ENCODE measurements at regions of chr15 and their contacts with region 1.

Region 1: DNA sequence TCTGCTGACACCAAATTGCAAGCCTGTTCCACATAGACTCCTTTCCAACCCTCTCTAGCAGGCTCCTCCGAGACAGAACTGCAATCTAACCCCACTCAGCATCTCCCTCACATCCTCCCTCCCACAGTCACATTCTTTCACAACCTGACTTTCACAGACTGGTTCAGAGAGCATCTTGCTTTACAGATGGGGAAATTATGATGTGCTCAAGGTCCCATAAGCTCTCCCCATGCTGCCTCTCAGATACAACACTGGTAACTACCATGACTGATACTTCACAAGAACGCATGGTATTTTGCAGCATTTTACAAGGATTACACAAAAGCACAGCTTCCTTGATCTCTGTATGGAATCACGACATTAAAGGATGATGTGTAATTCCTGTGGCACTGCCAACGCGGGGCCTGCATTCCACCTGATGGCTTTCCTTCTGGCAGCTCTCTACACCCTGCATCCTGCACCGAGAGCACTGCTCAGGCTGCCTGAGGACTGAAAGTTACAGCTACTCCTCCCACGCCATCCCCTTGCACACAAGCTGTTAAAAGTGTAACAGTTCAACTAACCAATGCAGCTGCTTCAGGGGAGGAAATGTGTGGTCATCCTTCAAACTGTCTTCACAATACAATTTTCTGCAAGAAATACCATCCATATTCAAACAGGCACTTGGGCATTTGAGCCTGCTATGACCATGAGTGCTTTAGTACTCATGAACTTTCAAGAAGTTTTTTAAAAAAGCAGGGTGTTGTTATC is 27.6 kb downstream of the TBC1D2B start:
- DNase-seq: peak; percentile 68
- ATAC-seq: peak; percentile 92
- H3K4me3 ChIP-seq: peak overlapping the region; percentile 45; the same call in 1 of the 2 replicates
- H3K27ac ChIP-seq: peak overlapping the region; percentile 53
- H3K4me1 ChIP-seq: peaks cover 71% of the 10 kb centered on the region
- H3K27me3 ChIP-seq: no peaks in the 10 kb centered on the region
- CTCF ChIP-seq: no peak
- EP300 ChIP-seq: peak; percentile 52 to 84
- POLR2A ChIP-seq: peak; percentile 63
- RAD21 ChIP-seq: no peak

Region 2: GRCh38 chr15:78000091-78000926 is 49.6 kb before region 1 on chr15:
- CTCF ChIA-PET with region 1: interaction called, 4 read pairs
- POLR2A ChIA-PET with region 1: no interaction called
- RAD21 ChIA-PET with region 1: interaction called, 7 read pairs
- SMC1A ChIA-PET with region 1: interaction called, 10 read pairs
- in situ Hi-C with region 1: no loop called
- intact Hi-C with region 1: no loop called
- DNase-seq: no peak
- ATAC-seq: peak; percentile 87
- H3K4me3 ChIP-seq: no peak overlapping the region
- H3K27ac ChIP-seq: no peak overlapping the region
- H3K4me1 ChIP-seq: peaks cover 16% of the 10 kb centered on the region
- H3K27me3 ChIP-seq: no peaks in the 10 kb centered on the region
- CTCF ChIP-seq: peak; percentile 62 to 82 (median 72)
- EP300 ChIP-seq: no peak
- POLR2A ChIP-seq: no peak
- RAD21 ChIP-seq: peak; percentile 82

Region 3: DNA sequence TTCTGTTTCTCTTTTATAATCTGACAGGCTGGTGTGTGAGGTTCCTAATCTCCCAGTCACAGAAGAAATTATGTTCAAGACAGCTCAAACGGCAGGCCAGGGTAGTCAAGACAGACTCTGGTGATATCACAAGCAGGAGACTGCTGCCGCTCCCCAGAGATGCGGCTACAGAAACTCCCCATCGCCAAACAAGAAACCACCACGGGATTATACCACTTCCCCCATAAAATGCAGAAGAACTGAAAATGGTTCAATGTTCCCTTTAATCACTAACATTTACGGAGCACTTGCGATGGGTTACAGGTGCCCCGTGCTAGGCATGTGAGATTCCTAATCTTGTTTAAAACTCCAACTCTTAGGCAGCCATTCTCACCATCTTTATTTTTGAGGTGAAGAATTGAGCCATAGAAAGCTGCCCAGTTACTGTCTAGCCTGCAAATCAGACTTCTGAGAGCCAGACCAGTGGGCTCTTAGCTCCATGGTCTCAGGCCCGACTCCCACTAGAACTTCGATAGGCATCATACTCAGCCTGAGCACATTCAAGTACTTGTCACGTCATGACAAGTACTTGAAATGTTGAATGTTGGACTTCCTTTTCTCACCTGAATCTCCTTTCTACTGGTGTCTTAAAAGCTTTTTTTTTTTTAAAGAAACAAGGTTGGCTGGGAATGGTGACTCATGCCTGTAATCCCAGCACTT is 30.8 kb before region 1 on chr15:
- CTCF ChIA-PET with region 1: interaction called, 8 read pairs
- POLR2A ChIA-PET with region 1: interaction called, 7 read pairs
- RAD21 ChIA-PET with region 1: interaction called, 18 read pairs
- SMC1A ChIA-PET with region 1: interaction called, 12 read pairs
- in situ Hi-C with region 1: no loop called
- intact Hi-C with region 1: no loop called
- DNase-seq: no peak
- ATAC-seq: peak; percentile 97
- H3K4me3 ChIP-seq: no peak overlapping the region
- H3K27ac ChIP-seq: peak overlapping the region; percentile 60
- H3K4me1 ChIP-seq: peaks cover 7% of the 10 kb centered on the region
- H3K27me3 ChIP-seq: no peaks in the 10 kb centered on the region
- CTCF ChIP-seq: no peak
- EP300 ChIP-seq: no peak
- POLR2A ChIP-seq: no peak
- RAD21 ChIP-seq: no peak

Region 4: GRCh38 chr15:78034495-78035191 is 15.2 kb before region 1 on chr15:
- CTCF ChIA-PET with region 1: interaction called, 19 read pairs
- POLR2A ChIA-PET with region 1: interaction called, 21 read pairs
- RAD21 ChIA-PET with region 1: interaction called, 22 read pairs
- SMC1A ChIA-PET with region 1: interaction called, 100 read pairs
- in situ Hi-C with region 1: no loop called
- intact Hi-C with region 1: no loop called
- DNase-seq: peak; percentile 66
- ATAC-seq: peak; percentile 92
- H3K4me3 ChIP-seq: no peak overlapping the region; the same call in 1 of the 2 replicates
- H3K27ac ChIP-seq: peak overlapping the region; percentile 4
- H3K4me1 ChIP-seq: peaks cover 40% of the 10 kb centered on the region
- H3K27me3 ChIP-seq: no peaks in the 10 kb centered on the region
- CTCF ChIP-seq: peak in 1 of 3 experiments; percentile 14; a peak in 1 of 6 replicates
- EP300 ChIP-seq: 0 out of 4 replicates have a peak, but pooled peaks of 1 of the 2 experiments have one; percentile 26
- POLR2A ChIP-seq: no peak
- RAD21 ChIP-seq: peak; percentile 24; the same call in 1 of the 2 replicates

Region 5: GRCh38 chr15:78077058-78077877 is 27.4 kb after region 1 on chr15 and contains the start of gene TBC1D2B:
- CTCF ChIA-PET with region 1: interaction called, 158 read pairs
- POLR2A ChIA-PET with region 1: interaction called, 6 read pairs
- RAD21 ChIA-PET with region 1: interaction called, 170 read pairs
- SMC1A ChIA-PET with region 1: interaction called, 305 read pairs
- in situ Hi-C with region 1: no loop called
- intact Hi-C with region 1: no loop called
- DNase-seq: no peak
- ATAC-seq: peak; percentile 81
- H3K4me3 ChIP-seq: peak within 1 kb of the TSS; percentile 99
- H3K27ac ChIP-seq: peak within 1 kb of the TSS; percentile 62
- H3K4me1 ChIP-seq: peaks cover 10% of the 10 kb centered on the region
- H3K27me3 ChIP-seq: no peaks in the 10 kb centered on the region
- CTCF ChIP-seq: no peak; a peak in 1 of 6 replicates
- EP300 ChIP-seq: no peak
- POLR2A ChIP-seq: no peak
- RAD21 ChIP-seq: no peak
- polyA plus RNA-seq, gene TBC1D2B: 1.3 to 1.4 TPM

Region 6: DNA sequence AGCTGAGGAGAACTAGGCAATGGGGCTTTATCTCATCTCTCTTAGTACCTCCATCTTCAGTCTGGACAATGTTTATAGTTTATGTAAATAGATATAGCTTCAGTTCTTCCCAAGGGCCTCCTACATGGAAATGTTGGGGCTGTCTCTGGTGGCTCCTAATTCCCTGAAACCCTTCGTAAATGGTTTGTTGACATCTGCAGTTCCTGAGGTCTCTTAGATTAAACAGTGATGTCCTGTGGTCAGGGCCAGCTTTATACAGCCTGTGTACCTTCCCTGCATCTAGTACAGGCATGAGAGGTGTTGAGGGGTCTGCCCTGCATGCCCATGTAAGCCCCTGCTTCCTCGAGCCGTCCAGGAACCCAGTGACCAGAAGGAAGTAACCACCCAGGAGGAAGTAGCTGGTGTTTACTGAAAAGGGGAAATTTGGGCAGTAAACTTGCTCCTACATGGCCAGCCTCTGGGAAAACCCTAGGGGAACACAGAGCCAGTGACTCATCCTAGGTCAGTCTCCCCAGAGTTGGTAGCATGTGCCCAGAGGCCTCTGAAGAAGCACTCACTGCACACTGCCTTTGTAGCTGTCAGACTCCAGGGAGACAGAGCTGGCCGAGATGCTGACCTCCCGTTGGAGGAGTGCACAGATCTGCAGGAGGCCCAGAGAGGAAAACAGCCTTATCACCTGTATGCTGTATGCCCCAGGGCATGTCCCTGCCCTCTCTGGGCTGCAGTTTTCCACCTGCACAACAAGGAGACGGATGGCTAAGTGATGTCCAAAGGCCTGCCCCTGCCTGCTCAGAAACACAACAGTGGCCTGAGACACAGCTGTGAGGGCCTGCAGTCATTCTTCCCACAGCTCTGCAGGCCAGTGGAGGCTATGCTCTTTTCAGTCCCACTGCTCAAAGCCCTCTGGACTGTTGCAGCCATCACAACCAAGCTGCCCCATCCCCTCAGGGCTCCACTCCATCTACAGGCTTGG is 32.5 kb after region 1 on chr15:
- CTCF ChIA-PET with region 1: interaction called, 158 read pairs
- POLR2A ChIA-PET with region 1: interaction called, 5 read pairs
- RAD21 ChIA-PET with region 1: interaction called, 6 read pairs
- SMC1A ChIA-PET with region 1: interaction called, 13 read pairs
- in situ Hi-C with region 1: no loop called
- intact Hi-C with region 1: no loop called
- DNase-seq: no peak
- ATAC-seq: peak; percentile 52
- H3K4me3 ChIP-seq: no peak overlapping the region
- H3K27ac ChIP-seq: no peak overlapping the region
- H3K4me1 ChIP-seq: peaks cover 6% of the 10 kb centered on the region
- H3K27me3 ChIP-seq: no peaks in the 10 kb centered on the region
- CTCF ChIP-seq: no peak
- EP300 ChIP-seq: no peak
- POLR2A ChIP-seq: no peak
- RAD21 ChIP-seq: no peak

Measured in GM12878 (cell line).